ENCODE measurements at regions of chr6 and their contacts with region 1.

Region 1: GRCh38 chr6:56683882-56684281 is 41.2 kb upstream of the DST start:
- DNase-seq: peak; percentile 40 to 79
- ATAC-seq: peak; percentile 87 to 96
- H3K4me3 ChIP-seq: no peak overlapping the region
- H3K27ac ChIP-seq: peak overlapping the region; percentile 58 to 61
- H3K4me1 ChIP-seq: peaks cover 64% of the 10 kb centered on the region
- CTCF ChIP-seq: no peak
- EP300 ChIP-seq: peak; percentile 18 to 32; a peak in 2 of 5 replicates
- POLR2A ChIP-seq: no peak
- RAD21 ChIP-seq: no peak

Region 2: GRCh38 chr6:56459025-56459810 is 224.7 kb before region 1 on chr6:
- CTCF ChIA-PET with region 1: no interaction called
- POLR2A ChIA-PET with region 1: no interaction called
- DNase-seq: no peak
- ATAC-seq: no peak
- H3K4me3 ChIP-seq: no peak overlapping the region
- H3K27ac ChIP-seq: no peak overlapping the region
- H3K4me1 ChIP-seq: no peaks in the 10 kb centered on the region
- CTCF ChIP-seq: no peak
- EP300 ChIP-seq: no peak
- POLR2A ChIP-seq: no peak
- RAD21 ChIP-seq: no peak

Region 3: DNA sequence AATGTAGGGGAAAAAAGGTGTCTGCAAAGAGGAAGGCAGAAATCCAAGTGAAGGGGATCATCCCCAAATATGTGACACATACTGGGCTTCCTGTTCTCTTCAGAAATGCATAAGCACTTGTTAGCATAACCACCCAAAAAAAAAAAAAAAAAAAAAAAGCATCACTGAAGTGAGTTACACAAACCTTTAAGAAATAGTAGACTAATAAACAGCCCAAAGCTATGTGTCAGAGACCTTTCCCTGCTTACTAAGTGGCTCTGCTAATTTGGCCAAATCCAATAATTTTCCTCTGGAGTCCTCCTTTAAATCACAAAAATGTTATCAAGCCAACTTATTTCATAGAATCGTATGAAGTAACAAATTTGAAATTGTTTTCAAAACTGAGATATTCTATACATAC is 33.7 kb before region 1 on chr6:
- CTCF ChIA-PET with region 1: no interaction called
- POLR2A ChIA-PET with region 1: no interaction called
- DNase-seq: no peak
- ATAC-seq: no peak
- H3K4me3 ChIP-seq: no peak overlapping the region
- H3K27ac ChIP-seq: peak overlapping the region; percentile 9 to 76; a peak in 5 of 6 replicates
- H3K4me1 ChIP-seq: peaks cover 71% of the 10 kb centered on the region
- CTCF ChIP-seq: no peak
- EP300 ChIP-seq: no peak
- POLR2A ChIP-seq: no peak
- RAD21 ChIP-seq: no peak

Region 4: DNA sequence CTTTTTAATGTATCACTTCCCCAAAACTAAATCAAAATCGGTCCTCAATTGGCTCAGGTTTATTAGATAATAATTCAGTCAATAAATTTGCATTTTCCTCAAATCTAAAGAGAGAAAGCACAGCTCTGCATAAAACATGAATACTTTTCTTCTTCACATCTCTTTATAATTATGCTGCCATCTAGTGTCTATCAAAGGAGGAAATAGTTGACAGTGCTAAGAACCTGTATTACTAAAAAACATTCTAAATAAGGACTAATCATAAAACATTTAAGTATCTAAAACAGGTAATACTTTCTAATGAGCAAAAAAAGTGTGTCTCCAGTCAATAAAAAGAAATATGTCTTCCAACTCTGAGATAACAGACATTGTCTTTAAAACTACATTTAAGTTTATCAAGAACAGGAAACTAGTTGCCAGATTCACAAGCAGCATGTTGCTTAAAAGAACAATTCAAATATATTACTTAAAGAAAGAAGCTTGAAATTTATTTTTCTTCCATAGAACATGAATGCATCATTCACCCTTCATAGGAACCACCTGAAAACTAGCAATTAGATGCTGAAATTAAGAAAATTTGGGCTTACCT is 15.3 kb after region 1 on chr6:
- CTCF ChIA-PET with region 1: interaction called, 13 read pairs
- POLR2A ChIA-PET with region 1: no interaction called
- DNase-seq: no peak
- ATAC-seq: peak in 1 of 2 experiments; percentile 67; a peak in 2 of 6 replicates
- H3K4me3 ChIP-seq: no peak overlapping the region
- H3K27ac ChIP-seq: peak overlapping the region in 1 of 2 experiments; percentile 35; a peak in 1 of 6 replicates
- H3K4me1 ChIP-seq: peaks cover 44% of the 10 kb centered on the region
- CTCF ChIP-seq: peak; percentile 56; the same call in 2 of the 3 replicates
- EP300 ChIP-seq: no peak
- POLR2A ChIP-seq: no peak
- RAD21 ChIP-seq: peak; percentile 54 to 68

Region 5: GRCh38 chr6:56724455-56724854 is 40.6 kb after region 1 on chr6:
- CTCF ChIA-PET with region 1: no interaction called
- POLR2A ChIA-PET with region 1: no interaction called
- DNase-seq: no peak
- ATAC-seq: peak in 1 of 2 experiments; percentile 43; a peak in 3 of 6 replicates
- H3K4me3 ChIP-seq: no peak overlapping the region
- H3K27ac ChIP-seq: peak overlapping the region; percentile 22 to 54; a peak in 2 of 6 replicates
- H3K4me1 ChIP-seq: peaks cover 58% of the 10 kb centered on the region
- CTCF ChIP-seq: no peak
- EP300 ChIP-seq: no peak
- POLR2A ChIP-seq: no peak
- RAD21 ChIP-seq: no peak

Region 6: DNA sequence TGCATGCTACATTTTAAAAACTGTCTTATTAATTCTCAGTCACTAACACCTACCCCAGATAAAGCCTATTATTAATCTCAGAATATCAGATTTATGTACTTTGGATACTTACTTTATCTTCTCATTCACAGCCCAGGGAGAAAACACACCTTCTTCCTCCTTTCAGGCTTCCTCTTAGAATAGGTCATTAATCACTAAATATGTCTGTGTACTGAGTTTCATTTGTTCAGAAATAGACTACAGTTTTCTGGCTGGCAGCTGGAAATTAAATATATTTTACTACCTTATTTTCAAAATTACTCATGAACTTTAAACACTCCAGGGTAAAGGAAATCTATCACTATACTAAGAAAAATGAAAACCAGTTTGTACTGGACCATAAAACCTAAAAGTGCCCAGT is 106.5 kb after region 1 on chr6:
- CTCF ChIA-PET with region 1: no interaction called
- POLR2A ChIA-PET with region 1: no interaction called
- DNase-seq: no peak
- ATAC-seq: no peak; a peak in 1 of 6 replicates
- H3K4me3 ChIP-seq: no peak overlapping the region
- H3K27ac ChIP-seq: peak overlapping the region in 1 of 2 experiments; percentile 33; a peak in 1 of 6 replicates
- H3K4me1 ChIP-seq: peaks cover 50% of the 10 kb centered on the region
- CTCF ChIP-seq: no peak
- EP300 ChIP-seq: no peak
- POLR2A ChIP-seq: no peak
- RAD21 ChIP-seq: no peak

Measured in A549 (cell line).